GM12878 (cell line): ENCODE measurements at regions of chr6 and their contacts with region 1.

Region 1: DNA sequence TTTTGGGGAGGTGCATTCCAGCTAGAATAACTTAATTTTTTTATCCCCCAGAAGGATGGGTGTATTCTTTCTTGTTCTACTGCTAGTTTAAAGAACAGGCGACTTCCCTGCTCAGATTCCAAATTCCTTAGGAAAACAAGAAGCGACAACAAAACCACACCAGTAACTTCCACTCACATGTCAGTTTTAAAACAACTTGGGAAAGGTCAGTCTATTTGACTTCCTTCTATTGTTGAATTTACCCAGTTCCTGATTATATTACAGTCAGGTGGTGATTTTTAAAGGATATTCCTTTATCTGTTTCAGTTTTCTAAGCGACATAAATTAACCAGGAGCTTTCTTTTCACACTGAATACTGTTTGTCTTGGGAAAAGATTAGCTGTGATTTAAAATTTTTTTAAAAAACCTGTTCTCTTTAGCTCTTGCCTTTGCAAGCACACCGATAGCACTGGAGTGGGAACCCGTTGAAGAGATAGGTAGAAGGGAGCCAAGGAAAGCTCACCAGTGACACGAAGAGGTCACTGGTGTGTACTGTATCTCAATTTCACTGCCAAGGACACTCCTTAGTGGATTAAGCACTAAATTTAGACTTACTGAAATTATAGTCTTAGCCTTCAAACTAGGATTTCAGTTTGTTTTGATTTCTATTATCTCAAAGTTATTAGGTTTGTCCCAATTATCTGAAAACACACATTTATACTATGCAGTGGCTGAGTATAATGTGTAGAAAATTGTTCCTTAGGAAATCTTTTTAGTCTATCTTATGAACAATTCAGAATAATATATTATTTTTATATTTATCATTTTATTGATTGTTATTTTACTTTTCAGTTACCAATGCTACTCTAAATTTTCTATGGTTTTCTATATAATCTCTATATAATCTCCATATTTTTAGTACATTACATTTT is 22.3 kb downstream of the MARCKS start:
- DNase-seq: peak; percentile 47
- ATAC-seq: peak; percentile 99
- H3K4me3 ChIP-seq: no peak overlapping the region
- H3K27ac ChIP-seq: no peak overlapping the region
- H3K4me1 ChIP-seq: no peaks in the 10 kb centered on the region
- H3K27me3 ChIP-seq: no peaks in the 10 kb centered on the region
- CTCF ChIP-seq: peak; percentile 83 to 89 (median 84)
- EP300 ChIP-seq: no peak
- POLR2A ChIP-seq: no peak
- RAD21 ChIP-seq: peak; percentile 97

Region 2: DNA sequence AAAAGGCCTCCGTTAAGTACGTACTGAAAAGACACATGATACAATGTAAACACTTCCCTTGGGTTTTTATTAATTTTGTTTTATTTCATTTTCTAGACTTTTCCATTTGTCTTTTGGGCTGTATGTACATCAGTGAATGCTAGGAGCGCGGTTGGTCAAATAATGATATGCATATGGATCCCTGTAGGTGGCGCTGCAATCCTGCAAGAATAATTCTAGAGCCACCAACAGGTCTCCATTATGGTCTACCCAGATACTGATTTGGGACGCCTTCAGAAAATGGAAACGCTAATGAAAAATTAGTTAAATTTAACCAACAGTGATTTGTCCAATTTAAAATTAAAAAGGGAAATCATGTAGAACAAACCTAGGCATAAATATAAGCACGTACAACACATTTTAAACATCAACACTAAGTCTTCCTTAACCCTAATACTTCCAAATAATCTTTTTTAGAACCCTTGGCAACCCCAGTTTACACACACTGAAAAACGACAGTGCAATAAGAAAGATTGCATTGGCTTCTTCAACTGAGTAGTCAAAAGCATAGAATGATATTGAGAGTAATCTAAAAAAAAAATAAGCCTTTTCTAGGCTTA is 1098.8 kb before region 1 on chr6:
- CTCF ChIA-PET with region 1: interaction called, 12 read pairs
- POLR2A ChIA-PET with region 1: no interaction called
- RAD21 ChIA-PET with region 1: interaction called, 26 read pairs
- SMC1A ChIA-PET with region 1: interaction called, 13 read pairs
- in situ Hi-C with region 1: loop called (anchors 10 kb)
- intact Hi-C with region 1: loop called (anchors 2 kb)
- DNase-seq: peak; percentile 24
- ATAC-seq: peak; percentile 99
- H3K4me3 ChIP-seq: no peak overlapping the region
- H3K27ac ChIP-seq: no peak overlapping the region
- H3K4me1 ChIP-seq: no peaks in the 10 kb centered on the region
- H3K27me3 ChIP-seq: no peaks in the 10 kb centered on the region
- CTCF ChIP-seq: peak; percentile 67 to 82 (median 69)
- EP300 ChIP-seq: no peak
- POLR2A ChIP-seq: no peak
- RAD21 ChIP-seq: peak; percentile 95

Region 3: DNA sequence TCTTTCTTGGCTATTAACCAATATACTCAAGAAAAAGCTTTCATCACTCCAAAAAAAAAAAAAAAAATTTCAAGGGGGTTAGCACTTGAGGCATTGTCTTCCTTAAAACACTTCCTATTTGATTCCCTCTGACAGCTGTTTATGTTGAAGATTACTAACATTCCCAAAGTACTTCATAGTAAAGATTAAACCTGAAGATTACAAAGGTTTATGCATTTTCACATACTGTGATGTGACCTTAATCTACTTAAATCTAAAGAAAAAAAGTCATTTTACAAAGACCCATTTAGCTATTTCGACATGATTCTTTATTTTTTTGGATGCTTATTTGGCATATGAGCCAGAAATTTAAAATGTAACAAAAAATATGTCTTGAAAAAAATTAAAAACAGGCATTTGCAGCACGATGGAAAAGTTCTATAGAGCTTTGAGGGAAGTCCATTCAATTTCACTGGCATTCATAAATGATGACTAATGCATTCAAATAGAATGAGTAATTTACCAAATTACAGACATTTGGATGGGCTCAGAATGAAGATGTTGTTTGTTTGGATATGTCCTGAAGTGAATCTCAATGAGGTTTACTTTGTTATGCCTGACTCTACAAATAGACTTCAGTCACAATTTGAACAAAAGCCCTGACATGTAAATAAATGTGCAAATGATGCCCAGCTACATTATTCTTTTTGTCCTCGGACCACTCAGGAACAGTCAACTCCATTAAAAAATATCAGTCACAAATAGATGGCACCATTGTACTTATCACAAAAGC is 696.9 kb before region 1 on chr6:
- CTCF ChIA-PET with region 1: interaction called, 10 read pairs
- POLR2A ChIA-PET with region 1: no interaction called
- RAD21 ChIA-PET with region 1: interaction called, 5 read pairs
- SMC1A ChIA-PET with region 1: interaction called, 3 read pairs
- in situ Hi-C with region 1: no loop called
- intact Hi-C with region 1: no loop called
- DNase-seq: no peak
- ATAC-seq: no peak
- H3K4me3 ChIP-seq: no peak overlapping the region
- H3K27ac ChIP-seq: no peak overlapping the region
- H3K4me1 ChIP-seq: no peaks in the 10 kb centered on the region
- H3K27me3 ChIP-seq: no peaks in the 10 kb centered on the region
- CTCF ChIP-seq: no peak; a peak in 1 of 6 replicates
- EP300 ChIP-seq: no peak
- POLR2A ChIP-seq: no peak
- RAD21 ChIP-seq: no peak

Region 4: DNA sequence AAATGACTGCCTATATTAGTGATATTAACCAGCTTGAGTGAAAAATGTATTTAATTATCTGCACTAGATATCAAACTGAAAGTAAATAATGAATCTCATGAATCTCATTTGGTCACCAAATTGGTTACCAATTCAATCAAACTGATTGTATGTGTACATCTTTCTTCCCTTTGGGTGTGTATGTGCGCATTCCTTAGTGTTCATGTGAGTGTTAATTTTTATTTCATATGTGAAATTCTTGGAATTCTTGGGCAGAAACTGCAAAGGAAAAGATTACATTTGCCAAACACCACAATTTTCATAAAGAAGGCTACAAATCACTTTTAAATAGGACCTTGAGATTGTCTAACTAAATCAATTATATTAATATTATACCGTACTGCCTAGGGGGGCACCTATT is 670.7 kb before region 1 on chr6:
- CTCF ChIA-PET with region 1: no interaction called
- POLR2A ChIA-PET with region 1: no interaction called
- RAD21 ChIA-PET with region 1: no interaction called
- SMC1A ChIA-PET with region 1: interaction called, 3 read pairs
- in situ Hi-C with region 1: no loop called
- intact Hi-C with region 1: loop called (anchors 10 kb)
- DNase-seq: no peak
- ATAC-seq: no peak
- H3K4me3 ChIP-seq: no peak overlapping the region
- H3K27ac ChIP-seq: no peak overlapping the region
- H3K4me1 ChIP-seq: no peaks in the 10 kb centered on the region
- H3K27me3 ChIP-seq: no peaks in the 10 kb centered on the region
- CTCF ChIP-seq: no peak
- EP300 ChIP-seq: no peak
- POLR2A ChIP-seq: no peak
- RAD21 ChIP-seq: no peak

Region 5: GRCh38 chr6:113306552-113307145 is 572.8 kb before region 1 on chr6:
- CTCF ChIA-PET with region 1: interaction called, 90 read pairs
- POLR2A ChIA-PET with region 1: no interaction called
- RAD21 ChIA-PET with region 1: interaction called, 37 read pairs
- SMC1A ChIA-PET with region 1: interaction called, 52 read pairs
- in situ Hi-C with region 1: no loop called
- intact Hi-C with region 1: loop called (anchors 1 kb)
- DNase-seq: peak; percentile 57
- ATAC-seq: peak; percentile 100
- H3K4me3 ChIP-seq: no peak overlapping the region
- H3K27ac ChIP-seq: no peak overlapping the region
- H3K4me1 ChIP-seq: no peaks in the 10 kb centered on the region
- H3K27me3 ChIP-seq: no peaks in the 10 kb centered on the region
- CTCF ChIP-seq: peak; percentile 79 to 83 (median 81)
- EP300 ChIP-seq: no peak
- POLR2A ChIP-seq: no peak
- RAD21 ChIP-seq: peak; percentile 81

Region 6: DNA sequence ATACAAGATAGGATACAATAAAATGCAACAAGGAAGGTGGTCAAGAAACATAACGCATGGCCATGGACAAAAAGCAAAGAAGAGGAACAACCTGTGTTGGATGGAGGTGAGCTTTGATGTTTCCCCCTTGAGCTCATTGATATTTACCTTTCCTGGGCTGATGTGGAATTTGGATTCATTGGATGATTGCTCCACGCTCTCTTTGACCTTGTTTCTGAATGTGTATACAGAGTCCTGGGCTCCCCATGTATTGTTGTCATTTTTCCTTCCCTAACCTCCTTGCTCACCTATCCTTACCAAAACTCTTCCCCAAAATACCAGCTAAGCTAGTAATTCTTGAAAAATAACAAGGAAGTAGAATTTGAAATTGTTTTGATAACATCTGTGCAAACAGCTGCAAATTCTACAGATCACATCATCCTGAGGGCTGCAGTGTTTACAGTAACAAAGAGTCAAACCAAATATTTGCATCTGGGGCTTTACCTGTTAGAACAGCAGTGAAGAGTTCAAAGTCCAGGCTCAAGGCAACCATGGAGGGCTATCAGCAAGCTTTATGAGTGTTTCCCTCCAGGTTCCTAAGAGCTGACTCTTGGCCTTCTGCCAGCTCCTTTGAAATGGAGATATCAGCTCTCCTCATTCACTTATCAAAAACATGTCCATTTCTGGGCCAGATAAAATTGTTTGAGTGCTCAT is 236.6 kb before region 1 on chr6:
- CTCF ChIA-PET with region 1: interaction called, 3 read pairs
- POLR2A ChIA-PET with region 1: interaction called, 5 read pairs
- RAD21 ChIA-PET with region 1: interaction called, 11 read pairs
- SMC1A ChIA-PET with region 1: interaction called, 5 read pairs
- in situ Hi-C with region 1: no loop called
- intact Hi-C with region 1: no loop called
- DNase-seq: no peak
- ATAC-seq: peak; percentile 81
- H3K4me3 ChIP-seq: peak overlapping the region; percentile 28; the same call in 1 of the 2 replicates
- H3K27ac ChIP-seq: peak overlapping the region; percentile 89
- H3K4me1 ChIP-seq: peaks cover 39% of the 10 kb centered on the region
- H3K27me3 ChIP-seq: no peaks in the 10 kb centered on the region
- CTCF ChIP-seq: no peak
- EP300 ChIP-seq: peak; percentile 83 to 88; a peak in 3 of 4 replicates
- POLR2A ChIP-seq: 0 out of 2 replicates have a peak, but pooled peaks have one; percentile 43
- RAD21 ChIP-seq: peak; percentile 25; the same call in 1 of the 2 replicates